SK-N-SH (cell line): ENCODE measurements at regions of chr19 and their contacts with region 1.

Region 1: DNA sequence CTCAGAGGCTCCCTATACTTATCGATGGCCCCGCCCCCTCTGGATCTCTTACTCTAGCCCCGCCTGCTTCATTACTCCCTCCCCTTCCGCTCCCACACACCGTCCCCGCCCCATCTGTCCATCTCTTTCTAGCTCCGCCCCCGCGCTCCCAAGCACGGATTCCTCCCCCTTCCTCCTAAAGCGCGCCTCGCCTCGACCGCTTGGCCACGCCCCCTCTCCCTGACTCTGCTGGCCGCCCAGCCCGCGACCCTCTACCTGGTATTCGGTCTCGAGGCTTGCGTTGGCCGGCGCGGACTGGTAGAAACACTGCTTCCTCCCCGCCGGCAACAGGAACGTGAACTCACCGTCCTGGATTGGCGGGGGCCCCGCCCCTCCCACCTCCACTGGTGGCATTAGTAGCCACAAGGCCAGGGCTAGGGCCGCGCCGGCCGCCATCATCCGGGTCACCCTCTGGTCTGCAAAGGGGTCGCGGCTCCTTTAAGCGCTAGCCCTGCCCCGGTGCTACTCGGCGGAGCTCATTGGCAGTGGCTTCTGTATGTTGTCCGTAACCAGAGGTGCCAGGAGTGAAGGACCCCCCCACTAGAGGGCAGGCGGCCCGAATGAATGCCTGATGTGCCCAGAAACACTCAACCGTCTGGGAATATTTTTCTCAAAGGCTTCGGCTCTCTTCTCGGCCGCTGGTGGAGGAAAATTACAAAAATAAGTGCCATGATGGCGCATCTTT is at the start of gene TMED1:
- DNase-seq: peak; percentile 99
- H3K4me3 ChIP-seq: peak within 1 kb of the TSS; percentile 73 to 75
- H3K27ac ChIP-seq: peak within 1 kb of the TSS; percentile 97
- H3K4me1 ChIP-seq: peaks cover 0 to 13% of the 10 kb centered on the region in 2 experiments; a peak in 1 of 4 replicates
- H3K27me3 ChIP-seq: no peaks in the 10 kb centered on the region
- CTCF ChIP-seq: peak; percentile 66
- EP300 ChIP-seq: peak in 1 of 2 experiments; percentile 16; a peak in 1 of 4 replicates
- RAD21 ChIP-seq: peak; percentile 71
- polyA plus RNA-seq, gene TMED1: 77.7 and 92.4 TPM in 2 replicates

Region 2: DNA sequence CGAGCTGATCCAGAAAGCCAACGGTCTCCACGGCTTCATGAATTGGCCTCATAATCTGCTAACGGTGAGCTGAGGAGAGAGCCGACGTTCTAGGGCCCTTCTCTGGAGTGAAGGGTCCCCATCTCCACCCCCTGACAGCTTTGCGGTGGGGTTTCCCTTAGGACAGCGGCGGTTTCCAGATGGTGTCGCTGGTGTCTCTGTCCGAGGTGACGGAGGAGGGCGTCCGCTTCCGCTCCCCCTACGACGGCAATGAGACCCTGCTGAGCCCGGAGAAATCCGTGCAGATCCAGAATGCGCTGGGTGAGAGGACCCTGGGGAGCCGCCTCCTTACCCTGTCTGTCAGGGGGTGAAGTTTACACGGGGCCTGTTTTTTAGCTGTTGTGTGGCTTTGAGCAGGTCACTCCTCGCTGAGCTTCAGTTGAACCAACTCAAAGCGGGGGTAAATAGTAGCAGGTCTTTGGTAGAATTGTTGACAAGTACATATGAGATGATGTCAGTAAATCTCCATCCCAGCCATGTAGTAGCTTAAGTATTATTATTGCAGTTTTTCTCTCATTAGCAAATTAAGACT is 133.9 kb before region 1 on chr19:
- CTCF ChIA-PET with region 1: interaction called, 11 read pairs
- POLR2A ChIA-PET with region 1: interaction called, 4 read pairs
- DNase-seq: peak; percentile 82
- H3K4me3 ChIP-seq: peak overlapping the region; percentile 69 to 70
- H3K27ac ChIP-seq: peak overlapping the region; percentile 45 to 46; a peak in 2 of 4 replicates
- H3K4me1 ChIP-seq: no peaks in the 10 kb centered on the region; a peak in 1 of 4 replicates
- H3K27me3 ChIP-seq: no peaks in the 10 kb centered on the region
- CTCF ChIP-seq: no peak
- EP300 ChIP-seq: no peak
- RAD21 ChIP-seq: peak; percentile 35

Region 3: GRCh38 chr19:10820173-10820572 is 15.7 kb before region 1 on chr19:
- CTCF ChIA-PET with region 1: interaction called, 16 read pairs
- POLR2A ChIA-PET with region 1: interaction called, 12 read pairs
- DNase-seq: peak; percentile 58
- H3K4me3 ChIP-seq: no peak overlapping the region
- H3K27ac ChIP-seq: peak overlapping the region in 1 of 2 experiments; percentile 58; a peak in 2 of 4 replicates
- H3K4me1 ChIP-seq: peaks cover 28 to 53% of the 10 kb centered on the region in 2 experiments; a peak in 3 of 4 replicates
- H3K27me3 ChIP-seq: no peaks in the 10 kb centered on the region
- CTCF ChIP-seq: peak; percentile 42
- EP300 ChIP-seq: no peak
- RAD21 ChIP-seq: peak; percentile 35; the same call in 1 of the 2 replicates

Region 4: DNA sequence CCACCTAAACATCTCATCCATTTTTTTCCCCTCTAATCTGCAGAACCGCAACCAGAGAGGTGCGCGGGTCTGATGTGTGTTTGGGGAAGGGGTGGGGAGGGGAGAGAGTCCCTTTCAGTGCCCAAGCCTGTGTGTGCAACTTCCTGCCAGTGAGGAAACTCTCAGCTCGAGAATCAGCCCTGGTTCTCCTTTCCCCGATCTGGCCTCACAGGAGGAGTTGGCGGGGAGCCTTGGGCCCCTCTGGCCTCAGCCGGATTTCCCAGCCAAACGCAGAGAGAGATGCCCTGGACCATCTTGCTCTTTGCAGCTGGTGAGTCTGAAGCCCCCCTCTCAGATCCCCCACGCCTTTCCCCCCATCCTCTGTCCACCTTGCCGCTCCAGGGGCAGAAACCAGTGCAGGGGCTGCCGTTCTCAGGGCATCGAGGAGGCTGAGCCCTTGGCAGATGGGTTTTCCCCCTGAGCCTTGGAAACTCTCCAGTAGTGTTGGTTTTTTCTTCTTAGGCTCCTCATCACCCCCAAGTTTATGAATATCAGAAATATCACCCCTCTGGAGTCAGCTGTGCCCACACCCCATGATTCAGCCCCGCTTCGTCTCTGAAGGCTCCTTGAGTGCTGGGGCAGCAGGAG is 12.4 kb after region 1 on chr19 and contains the start of gene C19orf38:
- CTCF ChIA-PET with region 1: interaction called, 13 read pairs
- POLR2A ChIA-PET with region 1: no interaction called
- DNase-seq: no peak
- H3K4me3 ChIP-seq: no peak within 1 kb of the TSS
- H3K27ac ChIP-seq: no peak within 1 kb of the TSS
- H3K4me1 ChIP-seq: no peaks in the 10 kb centered on the region
- H3K27me3 ChIP-seq: no peaks in the 10 kb centered on the region
- CTCF ChIP-seq: no peak
- EP300 ChIP-seq: no peak
- RAD21 ChIP-seq: no peak
- polyA plus RNA-seq, gene C19orf38: 0.05 and 0.15 TPM in 2 replicates

Region 5: DNA sequence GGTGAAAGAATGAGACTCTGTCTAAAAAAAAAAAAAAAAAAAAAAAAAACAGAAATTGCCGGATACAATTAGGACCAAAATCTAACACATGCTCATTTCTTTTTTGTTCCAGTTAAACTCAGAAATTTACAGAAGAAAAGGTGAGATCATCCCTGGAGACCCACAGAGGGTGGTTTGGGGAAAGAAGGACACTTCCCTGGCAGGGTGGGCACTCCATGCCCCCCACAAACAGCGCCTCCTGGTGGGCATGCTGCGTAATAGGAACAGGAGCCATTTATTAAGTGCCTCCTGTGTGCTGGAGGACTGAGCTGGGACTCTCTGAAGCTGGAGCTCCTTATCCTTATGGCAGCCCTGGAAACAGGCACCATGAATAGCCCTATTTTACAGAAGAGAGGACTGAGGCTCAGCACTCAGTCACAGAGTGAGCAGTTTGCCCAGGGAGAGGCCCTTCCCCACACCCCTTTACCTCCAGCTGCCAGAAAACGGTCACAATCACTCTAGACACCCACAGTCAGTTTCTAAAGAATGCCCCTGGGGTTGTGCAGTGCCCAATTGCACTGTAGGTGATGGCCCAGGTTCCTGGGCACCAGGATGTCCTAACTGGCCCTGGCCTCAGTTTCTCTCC is 22.4 kb after region 1 on chr19:
- CTCF ChIA-PET with region 1: interaction called, 146 read pairs
- POLR2A ChIA-PET with region 1: interaction called, 8 read pairs
- DNase-seq: peak; percentile 69
- H3K4me3 ChIP-seq: peak overlapping the region in 1 of 2 experiments; percentile 52; a peak in 1 of 4 replicates
- H3K27ac ChIP-seq: no peak overlapping the region
- H3K4me1 ChIP-seq: no peaks in the 10 kb centered on the region
- H3K27me3 ChIP-seq: no peaks in the 10 kb centered on the region
- CTCF ChIP-seq: peak; percentile 95
- EP300 ChIP-seq: no peak
- RAD21 ChIP-seq: peak; percentile 47

Region 6: DNA sequence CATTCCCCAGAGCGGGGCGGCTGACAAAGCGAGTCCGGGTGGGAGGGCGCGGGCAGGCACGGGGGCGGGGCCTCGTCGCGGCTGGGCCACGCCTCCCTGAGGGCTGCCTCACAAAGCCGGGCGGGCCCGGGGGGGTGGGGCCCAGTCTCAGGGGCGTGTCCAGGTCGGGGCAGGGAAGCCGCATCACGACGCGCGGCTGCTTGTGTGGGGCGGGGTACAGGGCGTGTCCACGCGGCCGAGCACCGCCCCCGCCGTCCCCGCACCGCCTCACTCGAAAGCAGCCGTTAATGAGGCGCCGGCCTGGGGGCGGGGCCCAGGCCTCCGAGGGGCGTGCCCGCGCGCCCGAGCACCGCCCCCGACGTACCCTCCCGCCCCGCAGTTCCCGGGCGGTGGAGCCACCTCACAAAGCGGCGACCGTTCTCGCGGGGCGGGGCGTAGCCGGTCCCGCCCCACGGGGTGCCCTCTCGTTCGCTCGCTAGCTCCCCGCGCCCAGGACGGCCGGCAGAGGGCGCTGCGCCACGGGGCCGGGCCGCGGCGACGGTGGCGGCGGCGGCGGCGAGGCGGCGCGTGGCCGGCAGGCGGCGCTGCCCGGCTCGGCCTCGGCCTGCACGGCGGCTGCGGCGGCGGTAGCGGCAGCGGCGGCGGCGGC is 35.2 kb after region 1 on chr19 and contains the start of gene CARM1:
- CTCF ChIA-PET with region 1: interaction called, 146 read pairs
- POLR2A ChIA-PET with region 1: interaction called, 4 read pairs
- DNase-seq: peak; percentile 100
- H3K4me3 ChIP-seq: peak within 1 kb of the TSS; percentile 67 to 93
- H3K27ac ChIP-seq: peak within 1 kb of the TSS; percentile 62 to 84
- H3K4me1 ChIP-seq: peaks cover 8 to 10% of the 10 kb centered on the region in 2 experiments; a peak in 1 of 4 replicates
- H3K27me3 ChIP-seq: no peaks in the 10 kb centered on the region
- CTCF ChIP-seq: peak; percentile 39; the same call in 1 of the 2 replicates
- EP300 ChIP-seq: no peak
- RAD21 ChIP-seq: peak; percentile 60
- polyA plus RNA-seq, gene CARM1: 38.2 and 62.2 TPM in 2 replicates

Region 7: DNA sequence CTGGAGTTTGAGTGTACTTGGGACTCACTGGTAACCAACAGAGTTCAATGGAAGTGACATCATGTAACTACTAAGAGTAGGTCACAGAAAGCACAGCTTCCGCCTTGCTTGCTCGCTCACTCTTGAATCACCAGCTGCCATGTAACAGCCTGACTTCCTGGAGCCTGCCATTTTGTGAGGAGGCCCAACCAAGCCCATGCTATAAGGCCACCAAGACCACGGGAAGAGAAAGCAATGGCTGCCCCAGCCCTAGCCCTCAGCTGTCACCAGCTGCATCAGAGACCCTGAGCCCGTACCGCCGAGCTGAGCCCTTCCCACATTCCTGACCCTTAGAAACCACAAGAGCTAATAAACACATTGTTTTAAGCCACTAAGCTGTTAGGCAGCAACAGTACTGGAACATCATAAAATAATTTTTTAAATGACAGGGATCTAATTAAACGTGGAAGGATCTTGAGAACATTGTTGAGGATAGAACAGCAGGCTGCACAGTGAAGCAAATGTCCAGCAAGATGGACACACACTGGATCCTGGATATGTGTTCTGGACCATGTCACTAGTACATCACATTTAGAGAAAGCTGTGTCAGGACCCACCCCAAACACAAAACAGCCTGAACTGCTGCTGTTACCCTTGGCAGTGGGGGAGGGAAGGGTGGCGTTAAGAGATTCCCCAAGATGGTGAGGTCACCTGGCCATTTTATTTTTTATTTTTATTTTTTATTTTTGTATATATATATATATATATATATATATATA is 231.6 kb after region 1 on chr19:
- CTCF ChIA-PET with region 1: no interaction called
- POLR2A ChIA-PET with region 1: no interaction called
- DNase-seq: no peak
- H3K4me3 ChIP-seq: no peak overlapping the region
- H3K27ac ChIP-seq: no peak overlapping the region
- H3K4me1 ChIP-seq: no peaks in the 10 kb centered on the region
- H3K27me3 ChIP-seq: no peaks in the 10 kb centered on the region
- CTCF ChIP-seq: no peak
- EP300 ChIP-seq: no peak
- RAD21 ChIP-seq: no peak